ENCODE measurements at regions of chr16 and their contacts with region 1.

Region 1: GRCh38 chr16:2752035-2752849 is at the start of gene SRRM2:
- DNase-seq: peak; percentile 97
- ATAC-seq: peak; percentile 90
- H3K4me3 Mint-ChIP-seq: peak within 1 kb of the TSS; percentile 99
- H3K27ac Mint-ChIP-seq: peak within 1 kb of the TSS; percentile 98
- H3K4me1 Mint-ChIP-seq: peaks cover 45% of the 10 kb centered on the region
- H3K27me3 Mint-ChIP-seq: no peaks in the 10 kb centered on the region
- total RNA-seq, gene SRRM2: 517 to 598 TPM

Region 2: GRCh38 chr16:2047330-2048115 is 704.7 kb before region 1 on chr16 and contains the starts of genes NTHL1 and TSC2:
- CTCF ChIA-PET with region 1: no interaction called
- POLR2A ChIA-PET with region 1: no interaction called
- intact Hi-C with region 1: loop called in 1 of 2 experiments (anchors 1 kb)
- DNase-seq: peak; percentile 97
- ATAC-seq: peak; percentile 97
- H3K4me3 Mint-ChIP-seq: peak within 1 kb of the TSS; percentile 89
- H3K27ac Mint-ChIP-seq: peak within 1 kb of the TSS; percentile 85
- H3K4me1 Mint-ChIP-seq: peaks cover 18% of the 10 kb centered on the region
- H3K27me3 Mint-ChIP-seq: no peaks in the 10 kb centered on the region
- total RNA-seq, gene NTHL1: 22.6 to 26.1 TPM
- total RNA-seq, gene TSC2: 49.6 to 72.9 TPM

Region 3: GRCh38 chr16:2513405-2514322 is 238.6 kb before region 1 on chr16 and contains the start of gene ATP6V0C:
- CTCF ChIA-PET with region 1: no interaction called
- POLR2A ChIA-PET with region 1: no interaction called
- intact Hi-C with region 1: loop called in 1 of 2 experiments (anchors 1 kb)
- DNase-seq: peak; percentile 95
- ATAC-seq: peak; percentile 90
- H3K4me3 Mint-ChIP-seq: peak within 1 kb of the TSS; percentile 93
- H3K27ac Mint-ChIP-seq: peak within 1 kb of the TSS; percentile 95
- H3K4me1 Mint-ChIP-seq: peaks cover 44% of the 10 kb centered on the region
- H3K27me3 Mint-ChIP-seq: no peaks in the 10 kb centered on the region
- total RNA-seq, gene ATP6V0C: 91.7 to 130 TPM

Region 4: GRCh38 chr16:2682209-2683021 is 69.8 kb before region 1 on chr16 and contains the start of gene KCTD5:
- CTCF ChIA-PET with region 1: no interaction called
- POLR2A ChIA-PET with region 1: interaction called, 9 read pairs
- intact Hi-C with region 1: loop called (anchors 1 to 2 kb)
- DNase-seq: peak; percentile 98
- ATAC-seq: peak; percentile 92
- H3K4me3 Mint-ChIP-seq: peak within 1 kb of the TSS; percentile 100
- H3K27ac Mint-ChIP-seq: peak within 1 kb of the TSS; percentile 98
- H3K4me1 Mint-ChIP-seq: peaks cover 28% of the 10 kb centered on the region
- H3K27me3 Mint-ChIP-seq: no peaks in the 10 kb centered on the region
- total RNA-seq, gene KCTD5: 24.0 to 26.2 TPM

Region 5: DNA sequence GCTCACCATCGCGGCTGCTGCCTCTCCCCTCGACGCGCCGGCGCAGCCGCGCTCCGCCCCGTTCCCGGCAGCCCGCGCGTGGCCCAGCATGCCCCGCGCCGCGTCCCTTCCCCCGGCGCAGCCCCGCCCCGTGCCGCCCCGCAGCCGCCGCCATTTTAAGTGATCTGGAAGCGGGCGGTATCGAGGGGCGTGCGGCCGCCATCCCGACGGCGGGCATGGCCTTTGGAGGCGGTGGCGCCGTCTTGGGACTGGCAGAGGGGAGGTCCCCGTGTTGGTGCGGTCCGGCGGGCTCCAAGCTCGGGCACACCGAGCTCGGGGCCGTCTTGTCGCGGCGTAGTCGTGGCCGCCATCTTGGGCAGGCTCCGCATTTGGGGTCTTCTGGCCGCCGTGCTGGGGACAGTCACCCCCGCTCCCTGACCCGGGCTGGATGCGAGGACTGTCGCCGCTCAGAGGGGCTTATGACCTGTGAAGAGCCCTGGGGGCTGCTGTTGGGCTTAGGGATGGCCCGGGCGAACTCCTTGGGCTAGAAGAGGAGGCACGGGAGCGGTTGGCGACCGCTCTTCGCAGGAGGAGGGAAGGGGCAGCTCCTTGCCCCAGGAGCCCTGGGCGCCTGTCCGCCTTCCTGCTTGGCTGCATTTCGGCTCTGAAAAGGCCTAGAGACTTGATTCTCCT is 25.1 kb after region 1 on chr16 and contains the start of gene ELOB:
- CTCF ChIA-PET with region 1: interaction called, 3 read pairs
- POLR2A ChIA-PET with region 1: interaction called, 26 read pairs
- intact Hi-C with region 1: loop called (anchors 1 kb)
- DNase-seq: peak; percentile 95
- ATAC-seq: peak; percentile 94
- H3K4me3 Mint-ChIP-seq: peak within 1 kb of the TSS; percentile 95
- H3K27ac Mint-ChIP-seq: peak within 1 kb of the TSS; percentile 96
- H3K4me1 Mint-ChIP-seq: peaks cover 26% of the 10 kb centered on the region
- H3K27me3 Mint-ChIP-seq: no peaks in the 10 kb centered on the region
- total RNA-seq, gene ELOB: 268 to 269 TPM

Region 6: GRCh38 chr16:2799866-2800239 is 47.6 kb after region 1 on chr16:
- CTCF ChIA-PET with region 1: no interaction called
- POLR2A ChIA-PET with region 1: no interaction called
- intact Hi-C with region 1: no loop called
- DNase-seq: no peak
- ATAC-seq: no peak
- H3K4me3 Mint-ChIP-seq: no peak overlapping the region
- H3K27ac Mint-ChIP-seq: no peak overlapping the region
- H3K4me1 Mint-ChIP-seq: no peaks in the 10 kb centered on the region
- H3K27me3 Mint-ChIP-seq: peaks cover 3% of the 10 kb centered on the region

Region 7: GRCh38 chr16:2821487-2822157 is 69.4 kb after region 1 on chr16:
- CTCF ChIA-PET with region 1: no interaction called
- POLR2A ChIA-PET with region 1: no interaction called
- intact Hi-C with region 1: no loop called
- DNase-seq: no peak
- ATAC-seq: no peak
- H3K4me3 Mint-ChIP-seq: no peak overlapping the region
- H3K27ac Mint-ChIP-seq: no peak overlapping the region
- H3K4me1 Mint-ChIP-seq: no peaks in the 10 kb centered on the region
- H3K27me3 Mint-ChIP-seq: no peaks in the 10 kb centered on the region

Region 8: DNA sequence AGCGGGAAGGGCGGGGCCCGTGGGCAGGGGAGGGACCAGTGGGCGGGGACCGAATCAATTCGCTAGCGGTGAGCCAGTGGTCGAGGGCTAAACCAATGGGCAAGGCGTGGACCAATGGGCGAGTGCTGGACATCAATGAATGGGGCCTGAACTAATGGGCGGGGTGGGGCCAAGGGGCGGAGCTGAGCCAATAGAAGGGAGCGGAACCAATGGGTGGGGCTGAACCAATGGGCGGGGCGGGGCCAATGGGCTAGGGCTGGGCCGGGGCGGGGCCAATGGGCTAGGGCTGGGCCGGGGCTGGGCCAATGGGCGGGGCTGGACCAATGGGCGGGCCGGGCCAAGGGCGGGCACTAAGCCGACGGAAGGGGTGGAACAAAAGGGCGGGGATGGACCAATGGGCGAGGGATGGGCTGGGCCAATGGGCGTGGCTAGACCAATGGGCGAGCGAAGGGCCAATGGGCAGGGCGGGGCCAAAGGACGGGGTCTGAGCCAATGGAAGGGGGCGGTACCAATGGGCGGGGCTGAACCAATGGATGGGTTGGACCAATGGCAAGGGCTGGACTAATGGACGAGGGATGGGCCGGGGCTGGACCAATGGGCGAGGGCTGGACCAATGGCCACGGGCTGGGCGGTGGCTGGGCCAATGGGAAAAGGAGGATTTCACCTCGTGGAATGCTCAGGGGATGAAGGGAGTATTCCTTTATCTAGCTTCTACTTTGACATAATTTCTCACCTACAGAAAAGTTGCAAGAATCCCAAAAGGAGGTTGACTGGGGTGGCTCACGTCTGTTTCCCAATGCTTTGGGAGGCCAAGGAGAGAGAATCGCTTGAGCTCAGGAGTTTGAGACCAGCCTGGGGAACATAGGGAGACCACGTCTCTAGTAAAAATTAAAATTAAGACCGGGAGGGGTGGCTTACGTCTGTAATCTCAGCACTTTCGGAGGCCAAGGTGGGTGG is 153.5 kb after region 1 on chr16:
- CTCF ChIA-PET with region 1: no interaction called
- POLR2A ChIA-PET with region 1: no interaction called
- intact Hi-C with region 1: loop called in 1 of 2 experiments (anchors 1 kb)
- DNase-seq: peak; percentile 100
- ATAC-seq: peak; percentile 81
- H3K4me3 Mint-ChIP-seq: peak overlapping the region; percentile 94
- H3K27ac Mint-ChIP-seq: peak overlapping the region; percentile 8
- H3K4me1 Mint-ChIP-seq: peaks cover 19% of the 10 kb centered on the region
- H3K27me3 Mint-ChIP-seq: no peaks in the 10 kb centered on the region

Measured in activated CD4-positive, alpha-beta T cell treated with anti-CD3 and anti-CD28 coated beads for 36 hours (primary cell).